Posterior cingulate gyrus (tissue), 11 donors: ENCODE measurements at regions of chr6 and their contacts with region 1.

Region 1: DNA sequence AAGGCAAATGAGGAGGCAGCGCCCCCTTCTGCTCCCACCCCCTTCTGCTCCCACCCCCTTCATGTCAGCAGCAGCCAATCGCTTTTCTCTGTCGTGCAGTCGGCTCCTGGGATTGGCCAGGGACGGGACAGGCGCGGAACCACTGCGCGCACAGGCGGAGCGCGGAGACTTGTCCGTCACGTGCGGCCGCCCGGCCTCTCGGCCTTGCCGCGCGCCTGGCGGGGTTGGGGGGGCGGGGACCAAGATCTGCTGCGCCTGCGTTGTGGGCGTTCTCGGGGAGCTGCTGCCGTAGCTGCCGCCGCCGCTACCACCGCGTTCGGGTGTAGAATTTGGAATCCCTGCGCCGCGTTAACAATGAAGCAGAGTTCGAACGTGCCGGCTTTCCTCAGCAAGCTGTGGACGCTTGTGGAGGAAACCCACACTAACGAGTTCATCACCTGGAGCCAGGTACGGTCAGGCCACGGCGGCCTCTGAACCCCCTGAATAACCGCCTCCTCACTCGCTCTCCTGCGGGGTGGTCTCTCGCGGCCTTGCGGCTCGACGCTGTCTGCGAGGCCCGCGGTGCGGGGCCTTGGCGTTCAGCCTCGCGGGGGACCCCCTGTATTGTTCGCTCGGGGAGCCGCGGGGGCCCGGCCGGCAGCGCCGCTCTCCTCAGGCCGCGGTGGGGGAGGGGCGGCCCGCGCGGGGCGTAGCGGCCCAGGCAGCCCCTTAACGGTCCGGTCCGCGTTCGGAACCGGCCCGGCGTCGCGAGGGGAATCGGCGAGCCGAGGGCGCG is at the start of gene HSF2:
- DNase-seq: peak; percentile 96 to 100 (median 97)

Region 2: DNA sequence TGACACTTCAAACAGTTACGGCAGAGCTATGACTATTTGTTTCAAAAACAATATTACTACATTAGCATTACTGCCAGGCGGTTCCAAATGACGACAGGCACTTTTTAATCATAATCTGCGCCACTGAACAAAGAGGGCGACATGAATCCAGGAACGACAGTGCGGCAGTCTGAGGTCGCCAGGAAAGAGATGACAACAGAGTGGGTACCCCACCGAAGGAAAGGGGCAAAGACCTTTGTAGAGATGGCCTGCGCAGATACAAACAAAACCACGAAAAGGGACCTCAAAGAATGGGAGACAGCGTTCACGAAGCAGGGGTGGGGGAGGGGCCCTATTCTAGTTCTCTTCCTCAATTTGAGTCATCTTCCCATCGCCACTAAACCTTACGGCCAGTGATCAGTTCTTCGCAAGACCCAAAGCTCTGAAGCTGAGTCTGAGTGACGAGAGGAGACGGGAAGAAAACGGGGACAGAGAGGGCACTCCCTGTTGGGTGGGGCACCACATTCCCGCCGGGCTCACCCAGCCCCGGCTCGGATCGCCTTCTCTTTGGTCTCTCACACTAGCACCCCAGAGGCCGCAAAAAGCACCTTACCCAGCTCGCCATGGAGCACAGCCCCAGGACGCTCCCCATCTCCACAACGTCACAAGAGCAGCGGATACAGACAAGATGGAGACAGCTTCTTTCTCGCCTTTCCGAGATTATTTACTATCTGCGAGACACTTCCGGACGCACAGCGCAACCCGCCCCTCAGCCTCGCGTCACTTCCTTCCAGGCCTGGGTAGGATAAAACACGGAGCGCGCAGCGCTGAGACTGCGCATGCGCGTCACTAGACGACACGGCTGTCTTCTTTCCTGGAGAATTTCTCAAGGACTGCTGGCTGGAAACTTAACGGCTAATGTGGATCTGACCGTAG is 71.8 kb after region 1 on chr6 and contains the start of gene SERINC1:
- intact Hi-C with region 1: loop called (anchors 2 kb)
- DNase-seq: peak; percentile 89 to 99 (median 94)

Region 3: GRCh38 chr6:123215211-123215610 is 815.6 kb after region 1 on chr6:
- intact Hi-C with region 1: no loop called
- DNase-seq: no peak